K562 (cell line): ENCODE measurements at regions of chr10 and their contacts with region 1.

Region 1: GRCh38 chr10:44249490-44249889 is 135.4 kb downstream of the CXCL12 start:
- DNase-seq: peak in 1 of 4 experiments; percentile 56
- ATAC-seq: peak; percentile 93
- H3K4me3 ChIP-seq: peak overlapping the region; percentile 24
- H3K27ac ChIP-seq: peak overlapping the region; percentile 71; the same call in 2 of the 3 replicates
- H3K4me1 ChIP-seq: no peaks in the 10 kb centered on the region
- H3K27me3 ChIP-seq: no peaks in the 10 kb centered on the region
- CTCF ChIP-seq: no peak
- EP300 ChIP-seq: no peak
- POLR2A ChIP-seq: peak; percentile 42; the same call in 1 of the 2 replicates
- RAD21 ChIP-seq: no peak

Region 2: GRCh38 chr10:44233561-44234482 is 15.7 kb before region 1 on chr10:
- CTCF ChIA-PET with region 1: no interaction called
- POLR2A ChIA-PET with region 1: interaction called, 13 read pairs
- in situ Hi-C with region 1: no loop called
- intact Hi-C with region 1: no loop called
- DNase-seq: peak in 3 of 4 experiments; percentile 27 to 87 (median 35)
- ATAC-seq: peak; percentile 83
- H3K4me3 ChIP-seq: no peak overlapping the region
- H3K27ac ChIP-seq: peak overlapping the region; percentile 82; the same call in 2 of the 3 replicates
- H3K4me1 ChIP-seq: peaks cover 12 to 18% of the 10 kb centered on the region in 2 experiments
- H3K27me3 ChIP-seq: no peaks in the 10 kb centered on the region
- CTCF ChIP-seq: no peak
- EP300 ChIP-seq: peak; percentile 58
- POLR2A ChIP-seq: no peak
- RAD21 ChIP-seq: no peak

Region 3: DNA sequence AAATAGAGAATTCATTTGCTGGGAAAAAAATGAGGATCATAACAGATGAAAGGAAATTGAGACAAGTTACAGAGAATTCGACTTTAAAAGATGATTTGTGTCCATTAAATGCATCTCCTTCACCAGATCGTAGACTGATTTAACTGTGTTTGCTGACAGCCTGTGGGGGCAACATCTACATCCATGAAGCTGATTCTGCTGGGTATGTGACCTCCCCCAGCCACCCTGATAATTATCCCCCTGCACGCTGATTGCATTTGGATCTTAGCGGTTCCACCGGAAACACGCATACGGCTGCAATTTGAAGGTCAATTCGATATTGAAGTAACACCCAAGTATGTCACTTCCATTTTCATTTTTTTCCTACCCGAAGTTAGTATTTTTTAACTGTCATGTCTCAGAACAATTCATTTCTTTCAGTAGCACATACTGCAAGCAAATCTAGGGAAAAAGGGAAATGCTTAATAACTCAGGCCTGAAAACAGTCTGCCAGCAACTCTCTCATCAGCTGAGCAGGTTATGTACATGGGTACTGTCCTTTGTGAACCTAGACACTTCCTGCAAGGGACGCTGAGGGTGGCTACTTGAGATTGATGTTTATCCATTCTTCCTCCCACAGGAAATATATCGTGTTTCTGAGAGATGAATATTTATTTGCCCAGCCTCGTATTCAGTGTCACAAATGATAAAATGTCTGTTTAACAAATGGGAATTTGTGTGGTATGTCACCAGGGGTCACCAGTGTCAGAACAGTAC is 886.1 kb after region 1 on chr10:
- CTCF ChIA-PET with region 1: no interaction called
- POLR2A ChIA-PET with region 1: no interaction called
- in situ Hi-C with region 1: no loop called
- intact Hi-C with region 1: no loop called
- DNase-seq: no peak
- ATAC-seq: no peak
- H3K4me3 ChIP-seq: no peak overlapping the region
- H3K27ac ChIP-seq: no peak overlapping the region
- H3K4me1 ChIP-seq: no peaks in the 10 kb centered on the region; a peak in 1 of 5 replicates
- H3K27me3 ChIP-seq: peaks cover 0 to 6% of the 10 kb centered on the region in 2 experiments; a peak in 2 of 5 replicates
- CTCF ChIP-seq: no peak
- EP300 ChIP-seq: no peak
- POLR2A ChIP-seq: no peak
- RAD21 ChIP-seq: no peak